Naive thymus-derived CD4-positive, alpha-beta T cell (primary cell): ENCODE measurements at regions of chr11 and their contacts with region 1.

Region 1: GRCh38 chr11:22079133-22079872 is 113.6 kb upstream of the ANO5 start:
- DNase-seq: no peak
- ATAC-seq: no peak
- H3K4me3 ChIP-seq: no peak overlapping the region
- H3K4me3 Mint-ChIP-seq: no peak overlapping the region
- H3K27ac ChIP-seq: no peak overlapping the region
- H3K27ac Mint-ChIP-seq: no peak overlapping the region
- H3K4me1 ChIP-seq: no peaks in the 10 kb centered on the region
- H3K4me1 Mint-ChIP-seq: no peaks in the 10 kb centered on the region
- H3K27me3 ChIP-seq: no peaks in the 10 kb centered on the region
- H3K27me3 Mint-ChIP-seq: no peaks in the 10 kb centered on the region

Region 2: GRCh38 chr11:22049276-22049675 is 30.0 kb before region 1 on chr11:
- CTCF ChIA-PET with region 1: no interaction called
- POLR2A ChIA-PET with region 1: no interaction called
- intact Hi-C with region 1: loop called in 1 of 2 experiments (anchors 1 kb)
- DNase-seq: no peak
- ATAC-seq: no peak
- H3K4me3 ChIP-seq: no peak overlapping the region
- H3K4me3 Mint-ChIP-seq: no peak overlapping the region
- H3K27ac ChIP-seq: no peak overlapping the region
- H3K27ac Mint-ChIP-seq: no peak overlapping the region
- H3K4me1 ChIP-seq: no peaks in the 10 kb centered on the region
- H3K4me1 Mint-ChIP-seq: no peaks in the 10 kb centered on the region
- H3K27me3 ChIP-seq: no peaks in the 10 kb centered on the region
- H3K27me3 Mint-ChIP-seq: no peaks in the 10 kb centered on the region

Region 3: GRCh38 chr11:22130462-22131053 is 51.3 kb after region 1 on chr11:
- CTCF ChIA-PET with region 1: no interaction called
- POLR2A ChIA-PET with region 1: no interaction called
- intact Hi-C with region 1: loop called in 1 of 2 experiments (anchors 10 kb)
- DNase-seq: no peak
- ATAC-seq: no peak
- H3K4me3 ChIP-seq: no peak overlapping the region
- H3K4me3 Mint-ChIP-seq: no peak overlapping the region
- H3K27ac ChIP-seq: no peak overlapping the region
- H3K27ac Mint-ChIP-seq: no peak overlapping the region
- H3K4me1 ChIP-seq: no peaks in the 10 kb centered on the region
- H3K4me1 Mint-ChIP-seq: no peaks in the 10 kb centered on the region
- H3K27me3 ChIP-seq: no peaks in the 10 kb centered on the region
- H3K27me3 Mint-ChIP-seq: no peaks in the 10 kb centered on the region